Activated CD4-positive, alpha-beta memory T cell treated with anti-CD3 and anti-CD28 coated beads for 36 hours (primary cell): ENCODE measurements at regions of chr15 and their contacts with region 1.

Region 1: DNA sequence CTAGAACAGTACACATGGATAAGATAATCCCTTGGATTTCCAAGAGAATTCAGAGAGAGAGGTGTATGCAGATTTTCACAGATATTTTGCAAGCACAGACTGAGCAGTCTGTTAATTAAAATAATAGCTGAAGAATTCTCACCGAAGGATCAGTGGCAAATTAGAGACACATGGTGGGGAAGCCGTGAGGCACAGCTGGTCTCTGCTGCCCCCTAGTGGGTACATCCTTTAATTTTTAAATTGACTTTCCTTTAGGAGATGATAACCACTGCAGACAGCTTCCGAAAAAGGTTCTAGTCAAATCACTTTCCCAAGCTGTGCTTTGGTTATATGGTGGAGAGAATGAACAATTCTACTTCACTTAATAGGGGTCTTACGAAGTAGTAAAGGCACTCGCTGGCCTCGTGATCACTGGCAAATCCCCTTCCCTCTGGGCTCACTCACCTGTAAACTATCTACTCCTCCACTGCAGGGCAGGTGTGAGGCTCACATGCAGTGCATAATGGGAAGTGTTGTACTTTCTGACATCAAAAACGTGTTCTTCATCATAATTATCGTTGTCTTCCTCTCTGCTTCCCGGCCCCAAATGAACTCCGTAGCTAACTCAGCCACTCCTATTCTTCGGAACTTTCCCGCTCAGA is 19.5 kb downstream of the MESD start:
- DNase-seq: peak; percentile 67
- H3K4me3 Mint-ChIP-seq: no peak overlapping the region
- H3K27ac Mint-ChIP-seq: no peak overlapping the region
- H3K4me1 Mint-ChIP-seq: peaks cover 9% of the 10 kb centered on the region
- H3K27me3 Mint-ChIP-seq: no peaks in the 10 kb centered on the region

Region 2: GRCh38 chr15:80455668-80456442 is 514.3 kb before region 1 on chr15:
- CTCF ChIA-PET with region 1: interaction called, 50 read pairs
- POLR2A ChIA-PET with region 1: no interaction called
- intact Hi-C with region 1: loop called (anchors 1 kb)
- DNase-seq: peak; percentile 67
- H3K4me3 Mint-ChIP-seq: no peak overlapping the region
- H3K27ac Mint-ChIP-seq: no peak overlapping the region
- H3K4me1 Mint-ChIP-seq: peaks cover 5% of the 10 kb centered on the region
- H3K27me3 Mint-ChIP-seq: peaks cover 12% of the 10 kb centered on the region

Region 3: GRCh38 chr15:80580106-80580505 is 390.0 kb before region 1 on chr15:
- CTCF ChIA-PET with region 1: no interaction called
- POLR2A ChIA-PET with region 1: no interaction called
- intact Hi-C with region 1: loop called (anchors 10 kb)
- DNase-seq: no peak
- H3K4me3 Mint-ChIP-seq: no peak overlapping the region
- H3K27ac Mint-ChIP-seq: no peak overlapping the region
- H3K4me1 Mint-ChIP-seq: peaks cover 2% of the 10 kb centered on the region
- H3K27me3 Mint-ChIP-seq: peaks cover 1% of the 10 kb centered on the region

Region 4: DNA sequence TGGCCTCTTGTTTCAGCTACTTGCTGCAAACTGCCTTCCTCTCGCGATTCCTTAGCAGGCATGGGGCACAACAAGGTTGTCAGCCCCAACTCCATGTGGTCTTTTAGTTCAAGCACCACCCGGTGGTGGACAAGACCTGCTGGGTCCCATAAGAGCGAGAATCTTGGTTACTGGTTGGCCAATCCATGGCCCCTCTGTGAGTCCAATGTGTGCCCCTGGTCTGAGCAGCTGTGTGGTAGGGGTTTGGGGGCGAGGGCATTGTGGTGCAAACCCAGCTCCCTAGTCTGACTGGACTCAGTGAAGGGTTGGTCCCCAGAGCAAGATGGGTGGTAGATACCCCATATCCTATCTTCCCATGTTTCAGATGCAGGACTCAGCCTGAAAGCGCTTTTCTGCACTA is 29.3 kb before region 1 on chr15:
- CTCF ChIA-PET with region 1: interaction called, 16 read pairs
- POLR2A ChIA-PET with region 1: no interaction called
- intact Hi-C with region 1: no loop called
- DNase-seq: no peak
- H3K4me3 Mint-ChIP-seq: no peak overlapping the region
- H3K27ac Mint-ChIP-seq: no peak overlapping the region
- H3K4me1 Mint-ChIP-seq: no peaks in the 10 kb centered on the region
- H3K27me3 Mint-ChIP-seq: no peaks in the 10 kb centered on the region

Region 5: DNA sequence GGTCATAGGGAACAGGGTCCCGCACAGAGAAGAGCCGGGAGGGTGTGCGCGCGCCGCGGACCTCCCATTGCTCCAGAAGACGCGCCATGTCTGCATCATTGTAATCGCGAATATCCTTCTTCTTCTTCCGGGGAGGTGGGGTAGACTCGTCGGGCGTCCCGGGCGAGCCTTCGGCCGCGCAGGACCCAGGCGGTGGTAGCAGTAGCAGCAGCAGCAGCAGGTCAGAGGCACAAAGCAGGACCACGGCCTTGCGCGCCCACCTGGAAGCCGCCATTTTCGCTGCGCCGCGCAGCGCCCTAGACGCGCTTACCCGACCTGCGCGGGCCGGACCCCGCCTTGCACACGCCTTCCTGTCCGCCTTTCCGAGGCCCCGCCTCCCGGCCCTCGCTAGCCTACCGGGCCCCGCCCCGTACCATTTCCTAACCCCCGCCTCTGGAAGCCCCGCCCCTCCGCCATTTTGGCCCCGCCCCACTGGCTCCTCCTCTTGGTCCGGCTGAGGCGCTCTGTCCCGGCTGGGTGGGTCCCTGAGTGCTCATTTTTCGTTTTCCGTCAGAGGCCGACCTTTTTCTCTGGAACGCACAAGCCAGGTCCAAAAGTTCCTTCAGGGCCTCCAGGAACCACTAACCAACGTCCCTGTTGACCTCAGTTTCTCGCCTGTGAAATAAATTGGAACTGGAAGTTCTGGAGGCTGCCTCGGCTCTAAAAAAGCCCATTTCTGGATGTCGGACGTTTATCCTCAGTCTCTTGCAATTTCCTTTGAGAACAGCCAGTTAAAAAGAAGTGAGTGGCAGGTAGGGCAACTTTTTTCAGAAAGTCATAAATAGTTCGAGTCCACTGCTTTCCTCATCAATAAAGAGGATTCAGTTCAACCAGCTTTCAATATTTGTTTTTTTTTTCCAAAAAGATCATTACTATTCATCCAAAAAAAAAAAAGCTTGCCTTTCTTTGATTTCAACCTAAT is 19.7 kb after region 1 on chr15 and contains the start of gene MESD:
- CTCF ChIA-PET with region 1: interaction called, 21 read pairs
- POLR2A ChIA-PET with region 1: no interaction called
- intact Hi-C with region 1: no loop called
- DNase-seq: peak; percentile 99
- H3K4me3 Mint-ChIP-seq: peak within 1 kb of the TSS; percentile 98
- H3K27ac Mint-ChIP-seq: peak within 1 kb of the TSS; percentile 93
- H3K4me1 Mint-ChIP-seq: peaks cover 51% of the 10 kb centered on the region
- H3K27me3 Mint-ChIP-seq: no peaks in the 10 kb centered on the region
- total RNA-seq, gene MESD: 20.0 to 20.5 TPM

Region 6: GRCh38 chr15:81182756-81183438 is 212.8 kb after region 1 on chr15:
- CTCF ChIA-PET with region 1: no interaction called
- POLR2A ChIA-PET with region 1: no interaction called
- intact Hi-C with region 1: no loop called
- DNase-seq: no peak
- H3K4me3 Mint-ChIP-seq: no peak overlapping the region
- H3K27ac Mint-ChIP-seq: no peak overlapping the region
- H3K4me1 Mint-ChIP-seq: no peaks in the 10 kb centered on the region
- H3K27me3 Mint-ChIP-seq: peaks cover 19% of the 10 kb centered on the region